ENCODE measurements at regions of chr12 and their contacts with region 1.

Region 1: GRCh38 chr12:14167005-14167628 is 185.7 kb upstream of the GRIN2B start:
- DNase-seq: peak in 1 of 3 donors; percentile 49
- ATAC-seq: peak; percentile 81 to 87 (median 82)
- H3K4me3 ChIP-seq: no peak overlapping the region
- H3K27ac ChIP-seq: no peak overlapping the region
- H3K4me1 ChIP-seq: no peaks in the 10 kb centered on the region
- H3K27me3 ChIP-seq: no peaks in the 10 kb centered on the region
- CTCF ChIP-seq: peak; percentile 88 to 94 (median 92)
- POLR2A ChIP-seq: no peak

Region 2: GRCh38 chr12:13851828-13852227 is 315.3 kb before region 1 on chr12:
- intact Hi-C with region 1: loop called in 1 of 2 experiments (anchors 10 kb)
- DNase-seq: no peak
- ATAC-seq: peak in 1 of 4 donors; percentile 52
- H3K4me3 ChIP-seq: no peak overlapping the region
- H3K27ac ChIP-seq: no peak overlapping the region
- H3K4me1 ChIP-seq: no peaks in the 10 kb centered on the region
- H3K27me3 ChIP-seq: no peaks in the 10 kb centered on the region
- CTCF ChIP-seq: no peak
- POLR2A ChIP-seq: no peak

Region 3: DNA sequence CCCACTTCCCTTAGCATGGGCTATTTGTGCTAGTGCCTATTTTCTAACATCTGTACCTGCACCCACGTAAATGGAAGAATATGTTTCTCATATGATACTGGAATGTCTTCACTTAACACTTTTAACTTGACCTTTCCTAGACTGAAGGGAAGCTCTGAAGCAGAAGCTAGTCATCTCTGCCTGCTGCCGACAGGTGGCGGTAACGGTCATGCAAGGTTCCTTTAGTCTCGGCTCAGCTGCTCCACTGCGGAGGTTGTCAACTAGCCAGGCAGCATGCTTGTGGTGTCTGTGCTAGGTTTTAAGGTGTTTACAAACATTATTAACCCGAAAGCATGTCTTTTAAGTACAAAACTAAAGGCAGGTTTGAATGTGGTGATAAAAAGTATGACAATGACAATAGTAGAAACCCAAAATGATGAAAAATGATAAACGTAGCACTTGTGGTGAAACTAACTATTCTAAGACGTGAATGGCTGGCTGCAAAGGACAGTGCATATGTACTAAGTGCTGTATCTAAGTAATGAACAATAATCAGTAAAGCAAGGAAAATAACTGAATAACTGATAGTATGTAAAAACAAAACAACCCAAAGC is 302.9 kb before region 1 on chr12:
- intact Hi-C with region 1: loop called (anchors 5 to 10 kb)
- DNase-seq: peak; percentile 79 to 80 (median 79)
- ATAC-seq: peak; percentile 97 to 99 (median 98)
- H3K4me3 ChIP-seq: no peak overlapping the region
- H3K27ac ChIP-seq: no peak overlapping the region
- H3K4me1 ChIP-seq: no peaks in the 10 kb centered on the region
- H3K27me3 ChIP-seq: peaks cover 0 to 5% of the 10 kb centered on the region in 2 donors
- CTCF ChIP-seq: peak; percentile 82 to 95 (median 92)
- POLR2A ChIP-seq: no peak